HAP-1 (cell line): ENCODE measurements at regions of chr17 and their contacts with region 1.

Region 1: DNA sequence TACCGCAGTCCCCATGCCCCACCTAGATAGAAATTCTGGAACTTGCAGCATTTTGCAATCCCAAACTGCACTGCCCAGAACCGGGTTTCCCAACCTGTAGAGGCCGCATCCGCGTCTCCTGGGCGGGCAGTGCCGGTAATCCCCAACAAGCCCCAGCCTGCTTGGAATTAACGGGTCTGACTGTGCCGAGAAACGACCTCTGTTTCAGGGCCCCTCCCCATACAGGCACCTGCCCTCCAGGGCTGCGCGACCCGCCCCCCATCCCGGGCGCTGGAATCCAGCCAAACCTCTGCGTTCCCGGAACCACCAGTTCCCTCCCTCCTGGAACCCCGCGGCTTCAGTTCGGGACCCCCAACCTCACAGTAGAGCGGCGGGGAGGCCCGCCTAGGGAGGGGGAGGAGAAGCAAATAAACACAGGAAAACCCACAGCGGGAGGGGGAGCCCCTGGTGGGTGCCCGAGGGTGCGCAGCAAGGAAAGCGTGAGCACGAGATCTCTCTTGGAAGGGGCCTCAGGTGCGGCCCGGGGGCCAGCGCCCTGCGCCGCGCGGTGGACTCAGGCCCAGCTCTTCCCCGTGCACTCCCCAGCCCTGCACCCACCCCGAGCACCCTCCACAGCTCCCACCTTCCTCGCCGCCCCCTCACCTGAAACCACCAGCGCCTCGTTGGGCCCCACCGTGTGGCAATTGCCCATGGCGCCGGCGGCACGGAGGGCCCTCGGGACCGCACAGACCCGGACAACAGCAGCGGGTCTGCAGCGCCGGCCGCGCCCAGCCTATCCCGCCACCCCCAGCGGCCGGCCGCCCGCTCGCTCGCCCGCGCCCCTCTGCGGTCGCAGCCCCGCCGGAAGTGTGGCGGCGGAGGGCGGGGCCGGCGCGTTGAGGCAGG is at the start of gene FLOT2:
- DNase-seq: peak; percentile 65 to 83
- H3K4me3 ChIP-seq: peak within 1 kb of the TSS; percentile 95
- H3K4me1 ChIP-seq: peaks cover 17% of the 10 kb centered on the region
- H3K27me3 ChIP-seq: no peaks in the 10 kb centered on the region

Region 2: DNA sequence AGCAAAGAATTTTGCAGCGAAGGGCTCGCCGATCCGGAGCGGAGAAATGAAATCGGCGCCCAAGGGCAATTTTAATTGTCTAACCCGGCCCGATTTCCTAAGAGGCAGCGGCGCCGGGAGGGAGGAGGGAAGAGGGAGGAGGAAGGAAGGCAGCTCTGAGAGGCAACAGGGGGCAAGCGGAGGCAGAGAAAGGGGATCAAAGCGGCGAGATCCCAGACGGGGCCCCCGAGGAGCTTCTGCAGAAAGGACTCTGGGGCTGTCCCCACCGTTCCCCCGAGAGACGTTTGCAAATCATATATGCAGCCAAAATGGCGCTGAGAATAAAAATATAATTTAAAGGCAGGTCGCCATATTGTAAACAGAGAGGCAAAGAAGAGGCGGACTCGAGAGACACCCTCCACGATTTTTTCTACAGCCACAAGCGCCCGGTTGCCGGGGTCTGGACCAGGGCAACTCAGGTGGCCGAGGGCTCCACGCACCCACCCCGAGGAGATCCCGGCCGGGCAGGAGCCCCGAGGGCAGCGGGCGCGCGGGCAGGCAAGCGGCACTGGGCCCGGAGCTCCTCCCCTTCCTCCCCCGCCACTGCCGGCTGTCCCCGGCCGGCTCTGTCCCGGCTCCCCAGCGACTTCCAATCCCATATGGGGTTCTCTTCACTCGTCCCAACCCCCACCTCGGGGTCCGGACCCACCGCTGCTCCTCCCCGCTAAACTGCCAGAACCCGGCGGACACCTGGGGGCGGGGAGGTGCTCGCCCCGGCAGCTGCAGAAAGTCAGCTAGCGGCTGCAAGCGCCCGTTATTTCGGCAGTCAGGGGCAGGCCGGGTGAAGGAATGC is 52.3 kb after region 1 on chr17:
- in situ Hi-C with region 1: loop called (anchors 5 kb)
- DNase-seq: peak; percentile 50 to 81
- H3K4me3 ChIP-seq: peak overlapping the region; percentile 74
- H3K4me1 ChIP-seq: peaks cover 15% of the 10 kb centered on the region
- H3K27me3 ChIP-seq: no peaks in the 10 kb centered on the region

Region 3: DNA sequence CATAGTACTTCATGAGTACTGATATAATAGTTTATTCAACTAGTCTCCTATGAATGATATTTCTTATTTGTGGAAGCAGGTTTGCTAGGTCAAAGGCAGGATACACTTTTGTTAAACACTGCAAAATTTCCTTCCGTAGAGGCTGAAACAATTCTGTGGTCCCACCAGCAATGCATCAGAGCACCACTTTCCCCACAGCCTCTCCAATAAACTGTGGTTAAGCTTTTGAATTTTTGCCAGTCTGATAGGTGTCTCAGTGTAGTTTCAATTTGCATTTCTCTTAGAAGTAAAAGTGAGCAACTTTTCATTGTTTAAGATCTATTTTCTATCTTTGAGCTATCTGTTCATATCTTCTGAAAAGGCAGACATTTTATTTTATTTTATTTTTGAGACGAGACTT is 762.0 kb after region 1 on chr17:
- in situ Hi-C with region 1: no loop called
- DNase-seq: no peak
- H3K4me3 ChIP-seq: no peak overlapping the region
- H3K4me1 ChIP-seq: no peaks in the 10 kb centered on the region
- H3K27me3 ChIP-seq: no peaks in the 10 kb centered on the region

Region 4: GRCh38 chr17:29687596-29687995 is 790.5 kb after region 1 on chr17:
- in situ Hi-C with region 1: no loop called
- DNase-seq: no peak
- H3K4me3 ChIP-seq: no peak overlapping the region
- H3K4me1 ChIP-seq: peaks cover 8% of the 10 kb centered on the region
- H3K27me3 ChIP-seq: no peaks in the 10 kb centered on the region